ENCODE measurements at regions of chr6 and their contacts with region 1.

Region 1: GRCh38 chr6:21166754-21167153 is 426.8 kb upstream of the SOX4 start:
- DNase-seq: no peak
- ATAC-seq: peak; percentile 28 to 74 (median 42)
- H3K4me3 ChIP-seq: no peak overlapping the region
- H3K27ac ChIP-seq: peak overlapping the region in 1 of 12 donors; percentile 19
- H3K4me1 ChIP-seq: peaks cover 0 to 27% (median 6%) of the 10 kb centered on the region in 12 donors
- H3K27me3 ChIP-seq: no peaks in the 10 kb centered on the region
- CTCF ChIP-seq: no peak
- POLR2A ChIP-seq: no peak

Region 2: GRCh38 chr6:21019614-21020013 is 147.1 kb before region 1 on chr6:
- intact Hi-C with region 1: no loop called
- DNase-seq: no peak
- ATAC-seq: no peak
- H3K4me3 ChIP-seq: no peak overlapping the region
- H3K27ac ChIP-seq: no peak overlapping the region
- H3K4me1 ChIP-seq: peaks cover 0 to 5% (median 0%) of the 10 kb centered on the region in 12 donors
- H3K27me3 ChIP-seq: no peaks in the 10 kb centered on the region
- CTCF ChIP-seq: peak in 2 of 12 donors; percentile 8 to 32
- POLR2A ChIP-seq: no peak

Region 3: GRCh38 chr6:21180155-21180554 is 13.4 kb after region 1 on chr6:
- intact Hi-C with region 1: loop called in 1 of 10 experiments (anchors 1 kb)
- DNase-seq: no peak
- ATAC-seq: no peak
- H3K4me3 ChIP-seq: no peak overlapping the region
- H3K27ac ChIP-seq: no peak overlapping the region
- H3K4me1 ChIP-seq: no peaks in the 10 kb centered on the region
- H3K27me3 ChIP-seq: no peaks in the 10 kb centered on the region
- CTCF ChIP-seq: no peak
- POLR2A ChIP-seq: no peak

Measured in heart left ventricle (tissue), 16 donors.